Colonic mucosa (tissue), 4 donors: ENCODE measurements at regions of chr4 and their contacts with region 1.

Region 1: GRCh38 chr4:118968005-118968404 is 79.4 kb downstream of the SYNPO2 start:
- DNase-seq: peak; percentile 56
- H3K4me3 ChIP-seq: no peak overlapping the region
- H3K27ac ChIP-seq: peak overlapping the region; percentile 69
- H3K4me1 ChIP-seq: peaks cover 5% of the 10 kb centered on the region
- H3K27me3 ChIP-seq: no peaks in the 10 kb centered on the region
- CTCF ChIP-seq: no peak

Region 2: GRCh38 chr4:118740869-118741268 is 227.1 kb before region 1 on chr4:
- intact Hi-C with region 1: loop called (anchors 10 kb)
- DNase-seq: no peak
- H3K4me3 ChIP-seq: no peak overlapping the region
- H3K27ac ChIP-seq: no peak overlapping the region
- H3K4me1 ChIP-seq: no peaks in the 10 kb centered on the region
- H3K27me3 ChIP-seq: no peaks in the 10 kb centered on the region
- CTCF ChIP-seq: peak; percentile 22

Region 3: DNA sequence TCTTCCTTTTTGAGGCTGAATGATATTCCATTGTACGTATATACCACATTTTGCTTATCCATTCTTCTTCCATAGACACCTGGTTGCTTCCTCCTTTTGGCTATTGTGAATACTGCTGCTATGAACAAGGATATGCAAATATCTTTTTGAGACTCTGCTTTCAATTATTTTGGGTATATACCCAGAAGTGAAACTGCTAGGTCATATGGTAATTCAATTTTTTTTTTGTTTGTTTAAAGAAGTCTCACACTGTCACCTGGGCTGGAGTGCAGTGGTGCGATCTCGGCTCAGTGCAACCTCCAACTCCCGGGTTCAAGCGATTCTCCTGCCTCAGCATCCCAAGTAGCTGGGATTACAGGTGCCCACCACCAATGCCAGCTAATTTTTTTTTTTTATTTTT is 207.5 kb before region 1 on chr4:
- intact Hi-C with region 1: no loop called
- DNase-seq: no peak
- H3K4me3 ChIP-seq: no peak overlapping the region
- H3K27ac ChIP-seq: no peak overlapping the region
- H3K4me1 ChIP-seq: no peaks in the 10 kb centered on the region
- H3K27me3 ChIP-seq: no peaks in the 10 kb centered on the region
- CTCF ChIP-seq: no peak

Region 4: GRCh38 chr4:118772081-118772766 is 195.8 kb before region 1 on chr4:
- intact Hi-C with region 1: loop called (anchors 5 kb)
- DNase-seq: no peak
- H3K4me3 ChIP-seq: no peak overlapping the region
- H3K27ac ChIP-seq: no peak overlapping the region
- H3K4me1 ChIP-seq: no peaks in the 10 kb centered on the region
- H3K27me3 ChIP-seq: no peaks in the 10 kb centered on the region
- CTCF ChIP-seq: peak; percentile 42

Region 5: DNA sequence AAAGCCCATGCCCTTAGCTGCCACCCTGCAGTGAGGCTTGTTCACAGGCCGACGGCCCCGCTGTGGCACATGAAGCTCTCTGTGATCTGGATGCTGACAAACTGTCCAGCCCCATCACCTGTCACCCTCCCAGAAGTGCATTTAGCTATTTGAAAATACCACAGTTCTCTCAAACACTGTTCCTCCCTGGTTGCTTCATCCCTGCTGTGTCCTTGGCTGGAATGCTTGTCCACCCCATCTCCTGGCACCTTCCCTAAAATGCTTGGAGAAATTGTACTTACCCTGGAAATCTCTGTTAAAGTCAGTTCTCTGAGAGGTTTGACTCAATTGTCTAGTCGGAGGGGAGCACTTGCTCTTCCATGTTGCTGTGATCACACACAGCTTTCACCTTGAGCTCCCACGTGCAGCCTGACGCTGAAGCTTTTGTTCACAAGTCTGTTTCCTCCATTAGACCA is 69.3 kb before region 1 on chr4:
- intact Hi-C with region 1: loop called (anchors 10 kb)
- DNase-seq: no peak
- H3K4me3 ChIP-seq: no peak overlapping the region
- H3K27ac ChIP-seq: no peak overlapping the region
- H3K4me1 ChIP-seq: no peaks in the 10 kb centered on the region
- H3K27me3 ChIP-seq: no peaks in the 10 kb centered on the region
- CTCF ChIP-seq: no peak